Activated CD4-positive, alpha-beta memory T cell treated with anti-CD3 and anti-CD28 coated beads for 36 hours (primary cell): ENCODE measurements at regions of chr3 and their contacts with region 1.

Region 1: GRCh38 chr3:177883957-177884356 is 652.3 kb upstream of the KCNMB2 start:
- DNase-seq: no peak
- H3K4me3 Mint-ChIP-seq: no peak overlapping the region
- H3K27ac Mint-ChIP-seq: no peak overlapping the region
- H3K4me1 Mint-ChIP-seq: peaks cover 19% of the 10 kb centered on the region
- H3K27me3 Mint-ChIP-seq: no peaks in the 10 kb centered on the region

Region 2: GRCh38 chr3:177711637-177712036 is 172.3 kb before region 1 on chr3:
- CTCF ChIA-PET with region 1: no interaction called
- POLR2A ChIA-PET with region 1: no interaction called
- intact Hi-C with region 1: no loop called
- DNase-seq: no peak
- H3K4me3 Mint-ChIP-seq: no peak overlapping the region
- H3K27ac Mint-ChIP-seq: no peak overlapping the region
- H3K4me1 Mint-ChIP-seq: no peaks in the 10 kb centered on the region
- H3K27me3 Mint-ChIP-seq: no peaks in the 10 kb centered on the region

Region 3: DNA sequence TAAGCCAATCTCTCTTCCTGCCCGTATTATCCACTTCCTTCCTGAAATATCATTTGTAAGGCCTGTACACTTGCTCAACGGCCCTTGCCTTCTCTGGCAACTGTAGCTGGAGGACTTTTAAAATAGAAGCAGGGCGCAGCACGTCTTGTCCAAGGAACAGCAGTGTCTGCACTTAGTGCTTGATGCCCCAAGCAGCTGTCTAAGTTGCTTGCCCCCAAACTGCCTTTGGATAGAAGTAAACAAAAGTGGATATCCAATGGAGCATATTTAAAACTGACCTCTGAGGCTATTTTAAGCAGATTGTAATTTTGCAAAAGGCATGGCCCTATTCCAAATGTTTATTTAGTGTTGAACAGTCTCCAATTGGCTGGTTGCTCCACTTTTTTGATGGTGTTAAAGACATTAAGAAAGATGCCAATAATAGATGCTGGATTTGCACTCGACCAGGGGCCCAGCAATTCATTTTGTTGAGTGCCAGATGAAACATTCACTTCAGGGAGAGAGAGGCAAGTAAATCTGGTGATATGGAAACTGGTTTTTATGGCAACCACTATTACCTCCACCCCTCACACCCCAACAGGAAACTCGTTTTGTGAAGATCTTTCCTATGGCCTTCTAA is 159.8 kb before region 1 on chr3:
- CTCF ChIA-PET with region 1: no interaction called
- POLR2A ChIA-PET with region 1: no interaction called
- intact Hi-C with region 1: no loop called
- DNase-seq: no peak
- H3K4me3 Mint-ChIP-seq: no peak overlapping the region
- H3K27ac Mint-ChIP-seq: no peak overlapping the region
- H3K4me1 Mint-ChIP-seq: peaks cover 9% of the 10 kb centered on the region
- H3K27me3 Mint-ChIP-seq: no peaks in the 10 kb centered on the region

Region 4: GRCh38 chr3:177843093-177843734 is 40.7 kb before region 1 on chr3:
- CTCF ChIA-PET with region 1: no interaction called
- POLR2A ChIA-PET with region 1: no interaction called
- intact Hi-C with region 1: loop called (anchors 5 kb)
- DNase-seq: no peak
- H3K4me3 Mint-ChIP-seq: no peak overlapping the region
- H3K27ac Mint-ChIP-seq: no peak overlapping the region
- H3K4me1 Mint-ChIP-seq: no peaks in the 10 kb centered on the region
- H3K27me3 Mint-ChIP-seq: no peaks in the 10 kb centered on the region

Region 5: GRCh38 chr3:177928156-177928873 is 44.4 kb after region 1 on chr3:
- CTCF ChIA-PET with region 1: no interaction called
- POLR2A ChIA-PET with region 1: no interaction called
- intact Hi-C with region 1: loop called (anchors 1 kb)
- DNase-seq: no peak
- H3K4me3 Mint-ChIP-seq: no peak overlapping the region
- H3K27ac Mint-ChIP-seq: no peak overlapping the region
- H3K4me1 Mint-ChIP-seq: peaks cover 24% of the 10 kb centered on the region
- H3K27me3 Mint-ChIP-seq: no peaks in the 10 kb centered on the region

Region 6: DNA sequence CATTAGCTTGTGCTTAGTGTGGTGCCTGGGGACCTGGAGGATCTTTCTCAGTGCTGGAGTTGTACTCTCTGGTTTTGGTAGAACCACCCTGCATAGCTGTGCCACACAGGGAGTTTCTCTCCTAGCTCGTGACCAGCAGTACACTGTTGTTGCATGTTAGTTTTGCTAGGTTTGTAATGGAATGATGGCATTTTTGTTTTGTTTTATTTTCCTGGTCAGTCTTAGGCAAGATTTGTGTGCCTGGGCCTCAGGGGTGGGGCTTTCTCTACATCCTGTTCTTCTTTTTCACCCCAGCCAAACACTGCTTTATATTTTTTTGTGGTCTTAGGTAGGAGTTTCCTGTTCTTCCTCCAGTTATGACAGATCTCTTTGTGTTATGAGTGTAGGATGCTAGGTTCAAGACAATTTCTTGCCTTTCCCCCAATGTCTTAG is 117.7 kb after region 1 on chr3:
- CTCF ChIA-PET with region 1: no interaction called
- POLR2A ChIA-PET with region 1: no interaction called
- intact Hi-C with region 1: loop called (anchors 5 kb)
- DNase-seq: peak; percentile 57
- H3K4me3 Mint-ChIP-seq: no peak overlapping the region
- H3K27ac Mint-ChIP-seq: peak overlapping the region; percentile 35
- H3K4me1 Mint-ChIP-seq: peaks cover 53% of the 10 kb centered on the region
- H3K27me3 Mint-ChIP-seq: no peaks in the 10 kb centered on the region